Transverse colon (tissue), 4 donors: ENCODE measurements at regions of chr13 and their contacts with region 1.

Region 1: GRCh38 chr13:42969558-42970172 is 22.4 kb downstream of the EPSTI1 start:
- DNase-seq: peak; percentile 90
- H3K4me3 ChIP-seq: no peak overlapping the region
- H3K27ac ChIP-seq: peak overlapping the region; percentile 67 to 79 (median 77)
- H3K4me1 ChIP-seq: peaks cover 6 to 27% (median 21%) of the 10 kb centered on the region in 4 donors
- H3K27me3 ChIP-seq: no peaks in the 10 kb centered on the region
- CTCF ChIP-seq: peak; percentile 80 to 91 (median 84)
- EP300 ChIP-seq: no peak
- POLR2A ChIP-seq: no peak

Region 2: DNA sequence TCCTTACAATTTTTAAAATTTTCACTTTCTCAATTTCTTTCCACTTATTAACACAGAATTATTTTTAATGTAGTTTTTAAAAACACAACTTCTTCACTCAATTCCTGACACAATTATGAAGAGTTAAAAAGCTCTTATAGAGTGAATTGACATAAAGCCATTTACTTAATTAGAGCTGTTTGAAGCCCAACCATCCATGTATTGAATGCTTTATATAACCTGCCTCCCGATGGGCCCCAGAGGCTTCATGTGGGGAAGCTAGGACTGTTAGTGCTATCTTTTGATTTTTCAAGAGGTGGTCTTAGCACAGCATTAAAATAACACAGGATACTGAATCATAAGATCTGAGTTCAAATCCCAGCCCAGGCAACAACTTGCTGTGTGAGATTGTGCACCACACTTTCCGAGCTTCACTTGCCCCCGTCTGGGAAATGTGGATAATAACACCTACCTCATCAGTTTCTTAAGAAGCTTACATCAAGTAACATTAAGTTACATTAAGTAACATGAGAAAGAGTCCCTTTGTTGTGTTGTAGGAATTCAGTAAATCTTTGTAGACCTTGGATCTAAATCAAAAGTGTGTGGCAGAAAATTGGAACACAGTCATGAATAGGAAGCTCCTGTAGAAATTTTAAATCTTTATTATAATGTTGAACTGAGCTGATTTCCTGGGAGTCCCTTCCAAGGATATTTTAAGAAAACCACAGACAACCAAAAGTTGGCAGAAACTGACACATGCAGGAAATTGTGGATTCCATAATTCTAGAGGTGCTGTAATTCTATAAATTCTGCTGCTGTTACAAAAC is 822.6 kb after region 1 on chr13:
- in situ Hi-C with region 1: no loop called
- intact Hi-C with region 1: loop called (anchors 10 kb)
- DNase-seq: no peak
- H3K4me3 ChIP-seq: no peak overlapping the region
- H3K27ac ChIP-seq: no peak overlapping the region
- H3K4me1 ChIP-seq: peaks cover 0 to 8% (median 6%) of the 10 kb centered on the region in 4 donors
- H3K27me3 ChIP-seq: peaks cover 24% of the 10 kb centered on the region
- CTCF ChIP-seq: no peak
- EP300 ChIP-seq: no peak
- POLR2A ChIP-seq: no peak

Region 3: DNA sequence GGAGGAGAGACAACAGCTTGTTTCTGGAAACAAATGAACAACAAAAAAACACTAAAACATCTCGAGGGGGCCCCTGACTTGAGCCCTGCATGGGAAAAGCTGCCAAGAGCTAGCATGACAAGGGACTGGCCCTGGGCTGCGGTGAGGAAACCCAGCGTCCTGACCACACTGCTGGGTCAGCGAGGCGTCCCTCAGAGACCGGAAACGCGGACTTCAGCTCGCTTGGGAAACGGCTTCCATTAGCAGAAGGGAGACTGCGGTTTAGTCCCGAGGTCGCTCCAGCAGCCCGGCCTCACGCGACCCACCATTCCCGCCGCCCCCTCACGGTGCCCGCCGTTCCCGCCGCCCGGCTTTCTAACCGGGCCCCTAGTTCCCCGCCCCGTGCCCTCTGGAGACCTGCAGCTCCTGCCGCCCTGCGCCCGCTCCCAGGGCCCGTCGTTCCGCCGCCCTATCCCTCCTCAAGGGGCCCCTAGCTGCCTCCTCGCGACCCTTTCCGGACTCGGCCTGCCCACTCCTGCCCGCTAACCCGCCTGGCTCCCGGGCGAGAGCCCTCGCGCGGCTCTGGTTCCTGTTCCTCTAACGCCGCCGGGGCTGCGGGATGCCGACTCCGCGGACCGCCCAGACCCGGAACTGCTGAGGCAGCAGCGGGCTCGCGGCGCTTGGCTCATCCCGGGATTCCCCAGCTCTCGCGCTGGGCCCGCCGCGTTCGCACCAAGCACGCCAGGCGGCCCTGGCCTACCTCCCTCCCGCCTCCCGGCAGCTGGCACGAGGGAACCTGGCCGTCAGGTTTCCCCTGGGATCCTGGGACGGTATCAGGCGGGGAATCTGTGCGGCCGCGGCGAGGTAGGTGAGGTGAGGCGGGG is 909.5 kb after region 1 on chr13 and contains the start of gene CCDC122:
- in situ Hi-C with region 1: loop called in 1 of 4 experiments (anchors 10 kb)
- intact Hi-C with region 1: no loop called
- DNase-seq: peak; percentile 88
- H3K4me3 ChIP-seq: peak within 1 kb of the TSS; percentile 73 to 93 (median 78)
- H3K27ac ChIP-seq: peak within 1 kb of the TSS; percentile 95 to 97 (median 96)
- H3K4me1 ChIP-seq: peaks cover 3 to 28% (median 17%) of the 10 kb centered on the region in 4 donors
- H3K27me3 ChIP-seq: no peaks in the 10 kb centered on the region
- CTCF ChIP-seq: peak in 1 of 5 experiments; percentile 10
- EP300 ChIP-seq: no peak
- POLR2A ChIP-seq: peak; percentile 95
- total RNA-seq, gene CCDC122: 0.60 to 9.5 (median 5.6) TPM in 3 of 4 donors, not detected in the other